ENCODE measurements at regions of chr9 and their contacts with region 1.

Region 1: DNA sequence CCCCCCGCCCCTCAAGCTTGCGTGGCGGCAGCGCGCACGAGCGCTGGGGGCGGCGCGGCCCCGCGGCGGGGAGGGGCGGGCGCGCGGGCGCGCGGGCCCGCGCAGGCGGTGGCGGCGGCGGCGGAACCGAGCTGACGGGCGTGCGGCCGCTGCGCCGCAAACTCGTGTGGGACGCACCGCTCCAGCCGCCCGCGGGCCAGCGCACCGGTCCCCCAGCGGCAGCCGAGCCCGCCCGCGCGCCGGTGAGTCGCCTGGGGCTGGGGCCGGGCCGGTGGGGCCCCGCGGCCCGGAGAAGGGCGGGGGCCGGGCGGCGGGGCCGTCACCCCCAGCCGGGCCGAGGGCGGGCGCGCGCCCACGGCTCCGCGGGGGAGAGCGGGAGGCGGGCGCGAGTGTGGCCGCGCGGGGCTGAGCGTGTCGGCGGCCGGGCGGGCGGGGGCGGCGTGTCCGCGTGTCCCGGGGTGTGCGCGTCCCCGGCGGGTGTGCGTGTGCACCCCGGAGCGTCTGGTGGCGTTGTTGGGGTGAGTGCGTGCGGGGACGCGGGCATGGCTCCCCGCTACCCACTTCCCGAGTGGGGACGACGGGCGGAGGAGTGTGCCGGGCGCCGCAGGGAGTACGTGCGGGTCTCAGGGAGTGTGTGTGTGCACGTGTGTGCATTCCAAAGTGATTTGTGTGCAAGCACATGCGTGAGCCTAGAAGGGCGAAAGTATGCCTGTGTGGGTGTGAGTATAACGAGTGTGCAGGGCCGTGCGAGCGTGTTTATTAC is at the start of gene NEK6:
- DNase-seq: peak; percentile 84
- ATAC-seq: peak; percentile 26
- H3K4me3 ChIP-seq: peak within 1 kb of the TSS; percentile 78
- H3K27ac ChIP-seq: peak within 1 kb of the TSS; percentile 99
- H3K4me1 ChIP-seq: peaks cover 33% of the 10 kb centered on the region
- H3K27me3 ChIP-seq: no peaks in the 10 kb centered on the region
- CTCF ChIP-seq: no peak
- POLR2A ChIP-seq: peak; percentile 59
- RAD21 ChIP-seq: no peak
- total RNA-seq, gene NEK6: 77.8 and 79.9 TPM in 2 replicates

Region 2: DNA sequence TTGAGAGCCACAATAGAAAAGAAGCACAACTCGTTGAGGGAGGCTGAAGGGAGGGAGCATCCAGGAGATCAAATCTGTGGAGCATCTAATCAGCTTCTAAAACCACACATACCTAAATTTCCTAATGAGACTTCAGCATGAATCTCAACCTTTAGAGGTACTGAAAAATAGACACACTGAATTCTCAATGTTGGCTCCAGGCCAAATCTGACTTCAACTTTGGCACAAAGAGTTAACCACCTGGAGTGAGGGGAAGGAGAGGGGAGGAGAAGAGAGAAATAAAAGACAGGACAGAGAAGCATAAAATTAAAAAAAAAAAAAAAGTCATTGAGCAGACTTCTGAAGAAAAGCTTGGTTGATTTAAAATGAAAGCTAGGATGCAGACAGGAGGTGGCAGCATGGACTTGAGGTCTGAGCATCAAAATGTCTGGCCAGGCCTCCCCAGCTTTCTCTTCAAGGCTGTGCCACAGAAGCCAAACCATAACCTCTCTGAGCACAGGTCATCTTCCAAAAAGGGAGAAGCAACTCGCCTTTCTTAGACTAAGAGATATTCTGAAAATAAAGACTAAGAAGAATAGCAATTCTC is 533.7 kb before region 1 on chr9:
- CTCF ChIA-PET with region 1: no interaction called
- POLR2A ChIA-PET with region 1: no interaction called
- dilution Hi-C with region 1: no loop called
- in situ Hi-C with region 1: no loop called
- intact Hi-C with region 1: loop called (anchors 10 kb)
- DNase-seq: peak; percentile 57
- ATAC-seq: peak; percentile 49; the same call in 1 of the 2 replicates
- H3K4me3 ChIP-seq: no peak overlapping the region
- H3K27ac ChIP-seq: no peak overlapping the region
- H3K4me1 ChIP-seq: no peaks in the 10 kb centered on the region
- H3K27me3 ChIP-seq: no peaks in the 10 kb centered on the region
- CTCF ChIP-seq: peak; percentile 41
- POLR2A ChIP-seq: no peak
- RAD21 ChIP-seq: peak; percentile 57

Region 3: GRCh38 chr9:124040935-124041816 is 216.8 kb before region 1 on chr9:
- CTCF ChIA-PET with region 1: no interaction called
- POLR2A ChIA-PET with region 1: no interaction called
- dilution Hi-C with region 1: no loop called
- in situ Hi-C with region 1: no loop called
- intact Hi-C with region 1: no loop called
- DNase-seq: no peak
- ATAC-seq: peak; percentile 60
- H3K4me3 ChIP-seq: peak overlapping the region; percentile 17; the same call in 1 of the 2 replicates
- H3K27ac ChIP-seq: no peak overlapping the region
- H3K4me1 ChIP-seq: no peaks in the 10 kb centered on the region; the same call in 1 of the 2 replicates
- H3K27me3 ChIP-seq: peaks cover 80% of the 10 kb centered on the region
- CTCF ChIP-seq: peak; percentile 78
- POLR2A ChIP-seq: no peak
- RAD21 ChIP-seq: peak; percentile 72

Region 4: DNA sequence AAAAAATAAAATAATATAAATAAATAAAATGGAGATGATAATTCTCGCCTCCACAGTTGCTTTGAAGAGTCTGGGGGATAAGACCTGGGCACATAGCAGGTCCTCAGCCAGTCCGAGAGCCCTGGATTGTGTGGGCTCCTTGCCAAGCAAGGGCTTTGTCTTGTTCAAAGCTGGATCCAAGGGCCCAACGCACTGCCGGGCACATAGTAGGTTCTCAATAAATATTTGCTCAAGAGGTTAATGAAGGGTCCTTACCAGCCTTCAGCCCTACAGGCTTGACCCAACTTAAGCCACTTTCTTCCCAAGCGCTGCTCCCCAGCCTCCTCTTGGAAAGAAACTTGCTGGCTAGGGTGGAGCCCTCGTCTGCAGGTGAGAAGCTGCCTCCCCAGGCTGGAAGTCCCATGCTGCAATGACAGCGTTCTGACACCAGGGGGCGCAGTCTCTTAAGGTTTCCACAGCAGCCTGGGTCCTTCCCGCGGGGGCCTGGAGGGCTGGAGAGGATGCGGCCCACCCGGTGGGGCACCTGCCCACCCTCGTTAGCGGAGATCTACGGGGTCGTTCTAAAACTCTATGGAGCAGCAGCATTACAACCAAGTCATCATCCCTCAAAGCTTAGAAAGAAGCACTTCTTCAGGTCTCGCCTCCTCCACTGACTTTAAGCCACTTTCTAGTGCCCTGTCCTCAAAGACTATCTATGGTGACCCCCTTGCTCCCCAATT is 131.3 kb before region 1 on chr9:
- CTCF ChIA-PET with region 1: interaction called, 3 read pairs
- POLR2A ChIA-PET with region 1: no interaction called
- dilution Hi-C with region 1: no loop called
- in situ Hi-C with region 1: no loop called
- intact Hi-C with region 1: loop called (anchors 2 kb)
- DNase-seq: peak; percentile 65
- ATAC-seq: peak; percentile 74
- H3K4me3 ChIP-seq: no peak overlapping the region
- H3K27ac ChIP-seq: no peak overlapping the region
- H3K4me1 ChIP-seq: peaks cover 4% of the 10 kb centered on the region; the same call in 1 of the 2 replicates
- H3K27me3 ChIP-seq: peaks cover 7% of the 10 kb centered on the region
- CTCF ChIP-seq: peak; percentile 84
- POLR2A ChIP-seq: no peak
- RAD21 ChIP-seq: peak; percentile 92

Region 5: GRCh38 chr9:124269556-124269955 is 11.5 kb after region 1 on chr9:
- CTCF ChIA-PET with region 1: no interaction called
- POLR2A ChIA-PET with region 1: no interaction called
- dilution Hi-C with region 1: no loop called
- in situ Hi-C with region 1: no loop called
- intact Hi-C with region 1: no loop called
- DNase-seq: no peak
- ATAC-seq: no peak
- H3K4me3 ChIP-seq: no peak overlapping the region
- H3K27ac ChIP-seq: 0 out of 2 replicates have a peak overlapping the region, but pooled peaks have one; percentile 4
- H3K4me1 ChIP-seq: peaks cover 72% of the 10 kb centered on the region
- H3K27me3 ChIP-seq: no peaks in the 10 kb centered on the region
- CTCF ChIP-seq: no peak
- POLR2A ChIP-seq: no peak
- RAD21 ChIP-seq: no peak

Region 6: GRCh38 chr9:124285903-124286291 is 27.9 kb after region 1 on chr9:
- CTCF ChIA-PET with region 1: no interaction called
- POLR2A ChIA-PET with region 1: no interaction called
- dilution Hi-C with region 1: no loop called
- in situ Hi-C with region 1: no loop called
- intact Hi-C with region 1: loop called (anchors 1 kb)
- DNase-seq: peak; percentile 99
- ATAC-seq: peak; percentile 69
- H3K4me3 ChIP-seq: no peak overlapping the region
- H3K27ac ChIP-seq: peak overlapping the region; percentile 90
- H3K4me1 ChIP-seq: peaks cover 63% of the 10 kb centered on the region
- H3K27me3 ChIP-seq: no peaks in the 10 kb centered on the region
- CTCF ChIP-seq: no peak
- POLR2A ChIP-seq: no peak
- RAD21 ChIP-seq: no peak; the same call in 1 of the 2 replicates

Region 7: GRCh38 chr9:124593651-124594058 is 335.6 kb after region 1 on chr9:
- CTCF ChIA-PET with region 1: no interaction called
- POLR2A ChIA-PET with region 1: no interaction called
- dilution Hi-C with region 1: no loop called
- in situ Hi-C with region 1: no loop called
- intact Hi-C with region 1: loop called (anchors 5 kb)
- DNase-seq: peak; percentile 12
- ATAC-seq: peak; percentile 29; the same call in 1 of the 2 replicates
- H3K4me3 ChIP-seq: no peak overlapping the region
- H3K27ac ChIP-seq: no peak overlapping the region
- H3K4me1 ChIP-seq: peaks cover 6% of the 10 kb centered on the region
- H3K27me3 ChIP-seq: peaks cover 10% of the 10 kb centered on the region
- CTCF ChIP-seq: no peak
- POLR2A ChIP-seq: no peak
- RAD21 ChIP-seq: no peak

Measured in IMR-90 (cell line).